ENCODE measurements at regions of chr16 and their contacts with region 1.

Region 1: DNA sequence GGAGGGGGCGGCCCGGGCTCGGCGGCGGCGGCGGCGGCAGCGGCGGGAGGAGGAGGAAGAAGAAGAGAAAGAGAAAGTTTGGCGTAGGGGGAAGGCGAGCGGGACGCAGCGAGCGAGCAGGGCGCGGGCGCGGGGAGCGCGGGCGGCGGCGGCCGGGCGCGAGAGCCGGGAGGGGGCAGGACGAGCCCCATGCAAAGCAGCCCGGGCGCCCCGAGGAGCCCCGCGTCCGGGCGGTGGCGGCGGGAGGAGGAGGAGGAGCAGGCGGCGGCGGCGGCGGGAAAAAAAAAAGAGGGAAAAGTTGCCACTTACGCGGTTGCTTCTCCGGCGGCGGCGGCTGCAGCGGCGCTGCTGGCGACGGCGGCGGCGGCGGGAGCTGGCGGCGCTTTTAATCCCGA is 10.3 kb upstream of the ZFHX3 start:
- DNase-seq: peak; percentile 54 to 85 (median 82)
- ATAC-seq: peak; percentile 27 to 55
- H3K4me3 ChIP-seq: peak overlapping the region; percentile 100
- H3K27ac ChIP-seq: peak overlapping the region; percentile 100
- H3K4me1 ChIP-seq: peaks cover 2% of the 10 kb centered on the region
- H3K27me3 ChIP-seq: no peaks in the 10 kb centered on the region

Region 2: DNA sequence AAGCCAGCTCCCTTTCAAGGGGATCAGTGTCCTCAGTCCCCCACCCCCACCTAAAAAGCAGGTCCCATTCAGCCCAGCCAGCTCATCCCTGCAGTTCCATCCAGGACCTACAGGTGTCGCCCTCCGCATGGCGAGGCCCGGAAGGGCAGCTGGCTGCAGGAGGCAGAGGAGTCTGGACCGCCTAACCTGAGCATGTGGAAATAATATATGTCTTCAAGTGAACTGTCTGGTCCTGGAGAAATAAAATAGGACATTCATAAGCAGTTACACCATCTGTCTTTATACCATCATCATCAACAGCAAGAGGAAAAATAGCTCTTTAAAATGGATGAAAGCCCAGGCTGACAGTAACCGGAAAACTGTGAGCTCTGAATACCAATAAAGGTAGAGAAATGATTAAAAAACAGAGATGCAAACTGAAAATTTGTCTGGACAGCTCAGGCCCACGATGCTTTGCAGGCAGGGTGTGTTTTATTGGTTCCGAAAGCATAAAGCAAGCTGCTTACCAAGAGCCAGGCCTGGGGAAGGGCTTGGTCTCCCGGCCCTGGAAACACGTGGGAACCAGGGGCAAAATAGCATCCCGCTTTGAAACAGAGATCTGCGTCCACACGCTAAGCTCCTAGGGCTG is 225.5 kb before region 1 on chr16:
- intact Hi-C with region 1: loop called in 2 of 4 experiments (anchors 10 kb)
- DNase-seq: peak; percentile 82 to 93 (median 92)
- ATAC-seq: peak; percentile 89 to 93
- H3K4me3 ChIP-seq: no peak overlapping the region
- H3K27ac ChIP-seq: no peak overlapping the region
- H3K4me1 ChIP-seq: no peaks in the 10 kb centered on the region
- H3K27me3 ChIP-seq: no peaks in the 10 kb centered on the region

Region 3: DNA sequence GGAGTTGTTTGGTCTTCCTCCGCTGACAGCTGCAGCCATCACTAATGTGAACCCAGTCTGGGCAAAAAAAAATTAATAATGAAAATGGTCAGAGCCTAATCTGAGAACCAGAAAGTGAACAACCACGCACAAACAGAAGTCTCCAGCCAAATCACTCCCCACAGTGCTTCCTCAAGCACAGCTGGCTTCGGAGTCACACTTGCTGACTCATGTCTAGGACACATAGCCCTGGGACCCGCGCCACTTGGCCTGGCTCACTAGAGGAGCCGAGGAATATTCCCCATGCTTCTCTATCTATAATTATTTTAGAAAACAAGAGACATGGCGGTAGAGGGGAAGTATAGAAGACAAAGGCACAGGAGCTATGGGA is 119.4 kb before region 1 on chr16:
- intact Hi-C with region 1: loop called in 2 of 4 experiments (anchors 5 to 10 kb)
- DNase-seq: peak; percentile 90 to 98 (median 97)
- ATAC-seq: peak; percentile 95 to 96
- H3K4me3 ChIP-seq: no peak overlapping the region
- H3K27ac ChIP-seq: peak overlapping the region; percentile 97
- H3K4me1 ChIP-seq: peaks cover 17% of the 10 kb centered on the region
- H3K27me3 ChIP-seq: no peaks in the 10 kb centered on the region

Region 4: DNA sequence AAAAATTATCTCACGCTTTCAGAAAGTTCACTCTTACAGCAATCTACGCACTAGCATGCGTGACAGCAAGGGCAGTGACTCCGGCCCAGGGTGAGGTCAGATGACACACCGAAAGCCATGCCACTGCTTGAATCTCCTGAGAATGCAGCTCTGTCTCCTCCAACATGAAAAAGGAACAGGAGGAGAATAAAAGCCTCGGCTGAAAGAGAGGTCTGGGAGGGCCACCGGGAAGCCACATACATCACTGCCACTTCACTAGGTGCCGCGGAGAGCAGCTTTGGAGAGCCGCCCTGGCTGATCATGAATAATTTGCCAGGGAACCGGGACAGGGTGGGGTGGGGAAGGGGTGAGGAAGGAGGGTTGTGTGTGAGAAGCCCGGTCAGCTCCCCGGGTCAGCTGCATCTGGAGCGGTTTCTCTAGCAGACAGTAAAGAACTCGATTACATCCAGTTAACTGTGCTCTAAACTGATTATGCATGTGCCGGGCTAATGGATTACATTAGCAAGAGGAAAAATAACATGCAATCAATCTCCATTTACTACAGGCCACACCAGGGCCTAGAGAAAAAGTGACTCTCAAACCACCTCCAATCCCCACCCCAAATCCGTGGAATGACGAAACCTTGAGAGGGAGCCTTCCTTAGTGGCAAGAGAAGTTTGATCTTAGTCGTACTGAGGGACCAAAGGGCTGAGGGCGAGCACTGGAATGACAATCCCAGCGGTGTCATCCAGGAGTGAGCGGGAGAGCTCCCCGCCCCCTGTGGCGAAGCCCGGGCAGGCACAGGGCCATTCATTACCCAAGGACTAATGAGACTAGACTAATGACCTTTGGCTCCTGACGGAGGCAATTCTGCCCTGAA is 110.6 kb before region 1 on chr16:
- intact Hi-C with region 1: loop called in 1 of 4 experiments (anchors 10 kb)
- DNase-seq: peak in 2 of 3 donors; percentile 61 to 69
- ATAC-seq: peak; percentile 47 to 77
- H3K4me3 ChIP-seq: no peak overlapping the region
- H3K27ac ChIP-seq: peak overlapping the region; percentile 34
- H3K4me1 ChIP-seq: peaks cover 14% of the 10 kb centered on the region
- H3K27me3 ChIP-seq: no peaks in the 10 kb centered on the region

Region 5: GRCh38 chr16:72989579-72990551 is 68.4 kb before region 1 on chr16:
- intact Hi-C with region 1: loop called in 1 of 4 experiments (anchors 10 kb)
- DNase-seq: peak; percentile 81 to 90 (median 85)
- ATAC-seq: peak; percentile 80 to 82
- H3K4me3 ChIP-seq: no peak overlapping the region
- H3K27ac ChIP-seq: peak overlapping the region; percentile 53
- H3K4me1 ChIP-seq: peaks cover 41% of the 10 kb centered on the region
- H3K27me3 ChIP-seq: no peaks in the 10 kb centered on the region

Region 6: GRCh38 chr16:73172241-73172972 is 114.2 kb after region 1 on chr16:
- intact Hi-C with region 1: loop called in 2 of 4 experiments (anchors 5 to 10 kb)
- DNase-seq: peak; percentile 78 to 92 (median 88)
- ATAC-seq: peak; percentile 72 to 78
- H3K4me3 ChIP-seq: no peak overlapping the region
- H3K27ac ChIP-seq: peak overlapping the region; percentile 33
- H3K4me1 ChIP-seq: no peaks in the 10 kb centered on the region
- H3K27me3 ChIP-seq: no peaks in the 10 kb centered on the region